ENCODE measurements at regions of chr11 and their contacts with region 1.

Region 1: DNA sequence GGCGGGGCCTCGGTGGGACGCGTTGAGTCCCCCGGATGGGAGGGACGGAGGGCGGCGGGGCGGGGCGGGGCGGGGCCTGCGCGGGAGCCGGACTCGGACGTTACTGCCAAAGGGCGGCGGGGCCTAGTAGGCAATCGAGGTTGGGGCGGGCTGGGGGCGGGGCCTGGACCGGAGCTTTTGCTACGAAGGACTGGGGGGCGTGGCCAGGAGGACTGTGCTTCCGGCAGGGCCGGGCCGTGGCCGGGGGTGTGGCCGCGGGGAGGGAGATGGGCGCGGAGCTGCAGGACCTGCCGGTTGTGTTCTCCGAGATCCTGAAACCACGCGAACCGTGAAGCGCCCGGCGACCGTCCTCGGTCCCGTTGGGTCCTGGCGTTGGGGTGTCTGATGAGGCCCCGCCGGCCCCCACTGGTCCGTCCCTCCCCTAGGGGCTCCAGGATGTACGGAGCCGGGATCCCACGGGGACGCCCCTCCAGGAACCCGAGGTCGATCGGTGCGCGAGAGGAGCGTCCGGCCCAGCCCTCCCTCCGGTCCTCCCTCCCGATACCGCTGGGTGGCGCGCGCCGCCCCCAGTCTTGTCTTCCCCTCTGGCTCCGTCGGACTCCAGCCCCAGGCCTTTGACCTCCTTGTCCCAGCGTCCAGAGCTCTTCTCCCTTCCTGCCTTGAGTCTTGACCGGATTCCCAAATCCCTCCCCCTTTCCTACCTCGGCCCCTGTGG is 648 bp upstream of the NUDT8 start:
- DNase-seq: peak; percentile 96 to 98 (median 98)
- ATAC-seq: peak; percentile 87
- H3K4me3 ChIP-seq: peak overlapping the region; percentile 71
- H3K27ac ChIP-seq: peak overlapping the region; percentile 80
- H3K4me1 ChIP-seq: peaks cover 10 to 72% of the 10 kb centered on the region in 2 experiments
- H3K27me3 ChIP-seq: no peaks in the 10 kb centered on the region
- CTCF ChIP-seq: peak; percentile 90 to 91 (median 91)
- EP300 ChIP-seq: no peak; the same call in 1 of the 2 replicates
- POLR2A ChIP-seq: peak; percentile 86
- RAD21 ChIP-seq: peak; percentile 52 to 70

Region 2: GRCh38 chr11:67613960-67614715 is 16.2 kb before region 1 on chr11:
- CTCF ChIA-PET with region 1: interaction called, 3 read pairs
- POLR2A ChIA-PET with region 1: interaction called, 36 read pairs
- in situ Hi-C with region 1: no loop called
- intact Hi-C with region 1: no loop called
- DNase-seq: peak; percentile 64 to 79 (median 77)
- ATAC-seq: peak; percentile 89
- H3K4me3 ChIP-seq: no peak overlapping the region
- H3K27ac ChIP-seq: peak overlapping the region; percentile 44; the same call in 2 of the 3 replicates
- H3K4me1 ChIP-seq: peaks cover 9 to 72% of the 10 kb centered on the region in 2 experiments; a peak in 4 of 5 replicates
- H3K27me3 ChIP-seq: no peaks in the 10 kb centered on the region
- CTCF ChIP-seq: peak; percentile 68 to 89 (median 80)
- EP300 ChIP-seq: no peak
- POLR2A ChIP-seq: peak; percentile 50; the same call in 1 of the 2 replicates
- RAD21 ChIP-seq: peak in 1 of 2 experiments; percentile 41; a peak in 2 of 4 replicates

Region 3: DNA sequence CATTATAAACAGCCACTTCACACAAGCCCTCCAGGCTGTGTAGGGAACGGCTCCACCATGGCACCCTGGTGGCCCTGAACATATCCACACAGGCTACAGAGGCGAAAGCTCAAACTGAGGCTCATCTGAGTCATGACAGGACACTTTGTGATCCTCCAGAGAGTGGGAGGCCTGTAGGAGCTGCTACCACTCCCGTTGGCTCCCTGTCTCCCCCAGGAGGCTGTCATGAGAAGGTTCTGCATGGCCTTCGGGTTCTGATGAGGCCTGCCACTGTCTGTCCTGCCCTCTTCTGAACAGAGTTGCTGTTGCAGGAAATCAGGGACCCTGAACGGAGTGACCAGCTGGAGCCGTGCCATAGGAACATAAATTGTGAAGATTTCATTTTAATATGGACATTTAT is 67.9 kb after region 1 on chr11:
- CTCF ChIA-PET with region 1: interaction called, 3 read pairs
- POLR2A ChIA-PET with region 1: interaction called, 3 read pairs
- in situ Hi-C with region 1: no loop called
- intact Hi-C with region 1: loop called (anchors 5 kb)
- DNase-seq: peak; percentile 30 to 60 (median 43)
- ATAC-seq: peak; percentile 97
- H3K4me3 ChIP-seq: no peak overlapping the region
- H3K27ac ChIP-seq: no peak overlapping the region
- H3K4me1 ChIP-seq: peaks cover 0 to 3% of the 10 kb centered on the region in 2 experiments; a peak in 1 of 5 replicates
- H3K27me3 ChIP-seq: peaks cover 35 to 42% of the 10 kb centered on the region in 2 experiments
- CTCF ChIP-seq: peak; percentile 58 to 93 (median 61)
- EP300 ChIP-seq: no peak
- POLR2A ChIP-seq: no peak
- RAD21 ChIP-seq: peak in 1 of 2 experiments; percentile 23; a peak in 1 of 4 replicates

Measured in K562 (cell line).